Heart right ventricle (tissue), 16 donors: ENCODE measurements at regions of chr6 and their contacts with region 1.

Region 1: GRCh38 chr6:117449549-117450439 is 24.1 kb upstream of the ROS1 start:
- DNase-seq: peak in 1 of 2 donors; percentile 58
- ATAC-seq: no peak
- H3K4me3 ChIP-seq: no peak overlapping the region
- H3K27ac ChIP-seq: no peak overlapping the region
- H3K4me1 ChIP-seq: peaks cover 0 to 14% (median 0%) of the 10 kb centered on the region in 9 donors
- H3K27me3 ChIP-seq: peaks cover 0 to 23% (median 12%) of the 10 kb centered on the region in 7 donors
- CTCF ChIP-seq: peak; percentile 63 to 86 (median 77)

Region 2: DNA sequence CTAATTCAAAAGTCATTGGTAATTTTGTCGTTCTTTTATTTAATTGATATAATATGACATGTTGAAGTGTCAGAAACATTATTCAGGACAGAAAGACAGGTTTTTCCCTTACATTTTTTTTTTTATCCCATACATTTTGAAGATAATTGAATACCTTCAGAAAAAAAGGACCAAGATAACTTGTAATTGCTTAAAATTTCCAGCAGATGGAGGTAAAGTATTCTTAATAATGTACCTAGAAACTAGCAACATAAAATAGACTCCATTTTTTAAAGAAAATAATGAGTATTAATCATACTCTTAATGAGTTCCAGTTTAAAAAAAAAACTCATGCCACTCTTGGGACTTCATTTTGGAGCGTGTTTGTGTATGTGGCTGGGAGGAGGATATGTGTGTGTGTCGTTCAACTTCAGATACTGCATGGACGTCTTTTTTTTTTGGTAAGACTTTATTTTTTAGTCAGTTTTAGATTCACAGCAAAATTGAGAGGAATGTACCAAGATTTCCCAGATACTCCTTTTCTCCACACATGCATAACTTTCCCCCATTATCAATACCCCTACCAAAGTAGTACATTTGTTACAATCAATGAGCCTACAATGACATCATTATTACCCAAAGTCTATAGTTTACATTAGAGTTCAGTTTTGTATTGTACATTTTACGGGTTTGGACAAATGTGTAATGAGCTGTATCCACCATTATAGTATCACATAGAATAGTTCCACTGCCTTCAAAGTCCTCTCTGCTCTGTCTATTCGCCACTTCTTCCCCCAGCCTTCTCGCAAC is 103.5 kb before region 1 on chr6:
- intact Hi-C with region 1: loop called in 4 of 10 experiments (anchors 5 to 10 kb)
- DNase-seq: no peak
- ATAC-seq: peak in 1 of 8 donors; percentile 11
- H3K4me3 ChIP-seq: peak overlapping the region in 2 of 10 donors; percentile 20 to 23
- H3K27ac ChIP-seq: no peak overlapping the region
- H3K4me1 ChIP-seq: no peaks in the 10 kb centered on the region
- H3K27me3 ChIP-seq: peaks cover 0 to 9% (median 0%) of the 10 kb centered on the region in 7 donors
- CTCF ChIP-seq: peak; percentile 26 to 73 (median 59)

Region 3: DNA sequence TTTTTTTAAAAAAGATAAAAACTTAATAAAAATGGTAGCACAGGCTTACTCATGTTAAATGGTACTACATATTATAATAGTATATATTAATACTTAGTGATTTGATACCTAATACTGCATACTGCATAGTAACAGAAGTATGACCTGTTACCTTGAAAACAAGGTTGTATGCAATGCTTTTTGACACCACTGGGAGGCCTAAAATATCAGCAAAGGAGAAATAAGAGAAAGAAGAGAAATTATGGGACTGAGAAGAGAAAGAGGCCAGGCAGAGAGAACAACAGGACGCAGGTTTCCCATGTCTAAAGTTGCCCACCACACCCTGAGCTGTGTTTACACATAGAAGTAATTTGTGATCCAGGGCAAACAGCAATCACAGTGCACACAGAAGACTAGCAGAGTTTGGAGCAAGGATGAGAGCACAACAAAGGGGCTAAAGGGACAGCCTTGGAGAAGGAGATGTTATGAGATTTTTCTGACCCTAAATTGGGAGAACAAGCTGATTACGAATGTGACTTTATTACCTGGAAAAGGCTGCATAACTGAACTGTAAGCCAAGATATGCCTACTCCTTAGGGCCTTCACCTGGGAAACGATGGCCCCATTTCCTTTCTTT is 97.2 kb before region 1 on chr6:
- intact Hi-C with region 1: loop called in 4 of 10 experiments (anchors 5 to 10 kb)
- DNase-seq: no peak
- ATAC-seq: no peak
- H3K4me3 ChIP-seq: no peak overlapping the region
- H3K27ac ChIP-seq: no peak overlapping the region
- H3K4me1 ChIP-seq: no peaks in the 10 kb centered on the region
- H3K27me3 ChIP-seq: no peaks in the 10 kb centered on the region
- CTCF ChIP-seq: peak in 8 of 9 donors; percentile 12 to 46 (median 38)

Region 4: GRCh38 chr6:117531346-117531745 is 81.6 kb after region 1 on chr6:
- intact Hi-C with region 1: no loop called
- DNase-seq: no peak
- ATAC-seq: peak in 1 of 8 donors; percentile 48
- H3K4me3 ChIP-seq: no peak overlapping the region
- H3K27ac ChIP-seq: peak overlapping the region in 5 of 10 donors; percentile 4 to 49 (median 37)
- H3K4me1 ChIP-seq: peaks cover 0 to 22% (median 9%) of the 10 kb centered on the region in 9 donors
- H3K27me3 ChIP-seq: no peaks in the 10 kb centered on the region
- CTCF ChIP-seq: no peak

Region 5: DNA sequence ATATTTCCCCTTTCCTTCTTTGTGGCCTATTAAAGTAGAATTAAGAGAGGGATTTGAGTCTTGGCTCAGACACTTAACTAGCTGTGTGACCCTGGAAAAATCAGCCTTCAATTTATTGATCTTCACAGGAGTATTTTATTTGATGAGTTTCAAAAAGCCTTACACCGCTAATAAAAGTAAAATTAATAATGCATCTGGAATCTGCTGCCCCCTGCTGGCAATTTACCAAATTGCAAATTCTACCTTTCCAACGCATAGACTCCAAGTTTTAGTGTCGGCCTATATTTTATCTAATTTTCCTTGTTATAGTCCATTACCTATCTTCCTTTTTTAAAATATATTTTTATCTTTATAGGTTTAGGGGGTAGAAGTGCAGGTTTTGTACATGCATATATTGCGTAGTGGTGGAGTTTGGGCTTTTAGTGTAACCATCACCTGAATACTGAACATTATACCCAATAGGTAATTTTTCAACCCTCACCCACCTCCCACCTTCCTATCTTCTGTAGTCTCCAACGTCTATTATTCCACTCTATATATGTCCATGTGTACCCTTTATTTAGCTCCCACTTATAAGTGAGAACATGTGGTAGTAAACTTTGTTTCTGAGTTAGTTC is 106.2 kb after region 1 on chr6:
- intact Hi-C with region 1: loop called (anchors 1 to 5 kb)
- DNase-seq: peak in 1 of 2 donors; percentile 41
- ATAC-seq: peak in 1 of 8 donors; percentile 37
- H3K4me3 ChIP-seq: no peak overlapping the region
- H3K27ac ChIP-seq: no peak overlapping the region
- H3K4me1 ChIP-seq: peaks cover 0 to 7% (median 0%) of the 10 kb centered on the region in 9 donors
- H3K27me3 ChIP-seq: no peaks in the 10 kb centered on the region
- CTCF ChIP-seq: peak; percentile 84 to 96 (median 88)

Region 6: GRCh38 chr6:117607511-117607910 is 157.7 kb after region 1 on chr6:
- intact Hi-C with region 1: loop called in 5 of 10 experiments (anchors 2 to 5 kb)
- DNase-seq: no peak
- ATAC-seq: no peak
- H3K4me3 ChIP-seq: no peak overlapping the region
- H3K27ac ChIP-seq: no peak overlapping the region
- H3K4me1 ChIP-seq: peaks cover 0 to 7% (median 6%) of the 10 kb centered on the region in 9 donors
- H3K27me3 ChIP-seq: peaks cover 0 to 12% (median 2%) of the 10 kb centered on the region in 7 donors
- CTCF ChIP-seq: no peak